ENCODE measurements at regions of chr15 and their contacts with region 1.

Region 1: DNA sequence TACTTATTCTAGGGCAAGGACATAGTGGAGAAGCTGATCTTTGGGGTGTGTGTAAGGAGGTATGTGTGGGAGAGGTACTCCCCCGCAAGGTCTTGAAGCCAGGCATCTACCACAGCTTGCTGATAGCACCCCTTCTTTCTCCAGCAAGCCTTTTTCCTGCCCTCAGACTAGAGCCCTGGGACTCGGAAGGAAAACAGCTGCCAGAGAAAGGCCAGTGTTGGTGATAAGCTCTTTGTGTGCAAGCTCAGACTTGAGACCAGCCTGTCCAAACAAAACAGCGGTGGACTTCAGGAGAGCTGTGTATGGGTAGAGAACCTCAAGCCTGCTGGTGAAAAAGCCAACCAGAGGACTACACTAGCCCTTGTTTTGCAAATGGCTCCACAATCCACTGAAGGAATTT is 1028.6 kb downstream of the MCTP2 start:
- DNase-seq: no peak
- ATAC-seq: no peak
- H3K4me3 ChIP-seq: no peak overlapping the region
- H3K4me1 ChIP-seq: no peaks in the 10 kb centered on the region
- CTCF ChIP-seq: no peak

Region 2: GRCh38 chr15:95146481-95146880 is 113.5 kb before region 1 on chr15:
- intact Hi-C with region 1: no loop called
- DNase-seq: no peak
- ATAC-seq: no peak
- H3K4me3 ChIP-seq: no peak overlapping the region
- H3K4me1 ChIP-seq: no peaks in the 10 kb centered on the region
- CTCF ChIP-seq: no peak

Region 3: DNA sequence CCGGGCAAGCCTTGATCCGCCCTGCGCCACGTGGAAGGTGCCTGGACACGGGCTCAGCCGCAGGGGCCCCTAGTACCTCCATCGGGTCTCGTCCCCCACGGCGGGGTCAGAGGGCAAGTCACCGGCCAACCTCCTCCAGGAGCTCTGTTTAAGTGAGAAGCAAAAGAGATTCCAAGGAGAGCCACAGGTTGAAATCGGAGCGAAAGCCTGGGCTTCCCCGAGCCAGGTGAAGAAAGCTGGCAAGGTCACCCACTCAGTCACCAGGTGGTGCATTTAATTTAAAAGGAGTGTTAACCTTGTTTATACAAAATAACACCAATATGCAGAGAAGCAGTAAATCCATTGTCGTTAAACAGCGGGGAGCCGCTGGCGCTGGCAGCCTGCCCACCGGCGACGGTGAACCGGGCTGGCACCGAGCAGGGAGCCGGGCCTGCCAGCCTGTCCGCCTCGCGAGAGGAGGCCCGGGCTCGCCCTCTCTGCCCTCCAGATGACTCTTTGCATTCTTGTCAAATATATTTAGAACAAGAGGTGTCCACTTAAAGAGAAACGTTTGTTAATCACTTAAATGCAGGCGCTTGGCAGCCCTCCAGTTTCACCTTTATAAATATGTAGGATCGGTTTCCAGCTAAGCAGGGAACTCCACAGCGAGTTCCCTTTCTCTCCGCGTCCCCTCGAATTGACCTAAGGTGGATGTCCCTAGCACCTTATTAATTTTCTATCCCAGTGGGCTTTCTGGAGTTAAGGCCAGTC is 793.2 kb after region 1 on chr15:
- intact Hi-C with region 1: no loop called
- DNase-seq: peak; percentile 43 to 45 (median 44)
- ATAC-seq: peak; percentile 57
- H3K4me3 ChIP-seq: no peak overlapping the region
- H3K4me1 ChIP-seq: peaks cover 11% of the 10 kb centered on the region
- CTCF ChIP-seq: no peak

Region 4: DNA sequence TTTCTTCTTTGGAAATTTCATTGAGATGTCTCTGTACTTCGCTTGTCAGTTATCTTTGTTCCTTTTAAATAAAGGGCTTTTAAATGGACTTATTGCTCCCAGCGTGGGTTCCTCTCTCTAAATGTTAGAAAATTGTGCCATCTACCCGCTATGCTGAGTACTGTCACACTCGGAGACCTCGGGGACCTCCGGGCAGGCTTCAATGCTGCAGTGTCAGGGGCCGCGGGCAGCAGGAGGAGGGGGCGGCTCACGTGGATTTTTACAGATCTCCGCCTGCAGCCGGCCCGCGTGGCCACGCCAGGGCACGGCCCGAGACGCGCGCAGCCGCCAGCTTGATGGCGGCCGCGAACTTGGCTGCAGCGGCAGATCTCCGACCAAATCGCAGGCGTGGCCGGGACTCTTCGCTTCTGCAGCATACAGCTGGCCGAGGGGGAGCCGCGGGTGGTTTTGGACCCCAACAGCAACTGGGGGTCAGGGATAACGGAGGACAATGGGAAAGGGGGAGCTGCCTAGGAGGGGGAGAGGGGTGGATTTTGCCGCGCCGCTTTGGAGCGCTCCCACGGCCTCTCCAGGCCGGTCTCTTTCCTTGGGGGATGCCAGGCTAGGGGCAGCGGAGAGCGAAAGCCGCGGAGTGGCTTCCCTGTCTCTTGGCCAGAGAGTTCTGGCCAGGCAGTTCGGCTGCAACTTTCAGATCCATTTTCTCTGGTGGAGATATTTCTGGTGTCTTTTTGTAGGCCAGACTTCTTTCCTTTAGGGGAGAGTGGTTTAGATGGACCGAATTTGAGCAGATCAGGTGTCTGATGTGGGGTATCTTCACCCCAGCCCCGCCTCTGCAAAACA is 1085.8 kb after region 1 on chr15:
- intact Hi-C with region 1: loop called in 1 of 2 experiments (anchors 10 kb)
- DNase-seq: peak in 2 of 3 donors; percentile 59 to 67
- ATAC-seq: peak; percentile 74
- H3K4me3 ChIP-seq: no peak overlapping the region
- H3K4me1 ChIP-seq: peaks cover 26% of the 10 kb centered on the region
- CTCF ChIP-seq: no peak